ENCODE measurements at regions of chr7 and their contacts with region 1.

Region 1: GRCh38 chr7:36440880-36441279 is 51.2 kb downstream of the ANLN start:
- DNase-seq: no peak
- H3K4me3 ChIP-seq: no peak overlapping the region
- H3K27ac ChIP-seq: no peak overlapping the region
- H3K4me1 ChIP-seq: peaks cover 0 to 4% (median 0%) of the 10 kb centered on the region in 4 experiments; a peak in 2 of 7 replicates
- H3K27me3 ChIP-seq: no peaks in the 10 kb centered on the region
- CTCF ChIP-seq: peak in 1 of 3 experiments; percentile 45; a peak in 2 of 4 replicates
- EP300 ChIP-seq: no peak
- POLR2A ChIP-seq: no peak
- RAD21 ChIP-seq: peak in 1 of 2 experiments; percentile 33; a peak in 3 of 4 replicates

Region 2: DNA sequence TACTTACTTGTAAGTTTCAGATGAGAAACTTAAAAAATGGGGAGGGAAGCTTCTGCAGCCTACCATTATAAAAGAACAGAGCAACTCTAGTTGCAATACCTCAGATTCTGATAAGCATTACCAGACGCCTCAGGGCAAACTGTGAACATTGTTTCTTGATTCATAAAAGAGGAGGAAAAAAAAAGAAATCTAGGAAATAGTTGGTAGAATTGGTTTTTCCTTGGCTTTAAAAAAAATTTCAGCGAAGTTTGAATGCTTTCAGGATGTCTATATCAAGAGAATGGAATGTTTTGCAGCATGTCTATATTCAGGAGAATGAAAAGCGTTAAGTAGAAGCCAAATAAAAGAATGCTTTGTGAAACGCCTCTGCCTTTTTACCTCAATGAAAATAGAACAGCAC is 68.7 kb before region 1 on chr7:
- CTCF ChIA-PET with region 1: no interaction called
- POLR2A ChIA-PET with region 1: no interaction called
- DNase-seq: no peak
- H3K4me3 ChIP-seq: no peak overlapping the region
- H3K27ac ChIP-seq: no peak overlapping the region
- H3K4me1 ChIP-seq: no peaks in the 10 kb centered on the region
- H3K27me3 ChIP-seq: peaks cover 0 to 13% (median 7%) of the 10 kb centered on the region in 4 experiments; a peak in 4 of 7 replicates
- CTCF ChIP-seq: no peak
- EP300 ChIP-seq: no peak
- POLR2A ChIP-seq: no peak
- RAD21 ChIP-seq: no peak

Region 3: DNA sequence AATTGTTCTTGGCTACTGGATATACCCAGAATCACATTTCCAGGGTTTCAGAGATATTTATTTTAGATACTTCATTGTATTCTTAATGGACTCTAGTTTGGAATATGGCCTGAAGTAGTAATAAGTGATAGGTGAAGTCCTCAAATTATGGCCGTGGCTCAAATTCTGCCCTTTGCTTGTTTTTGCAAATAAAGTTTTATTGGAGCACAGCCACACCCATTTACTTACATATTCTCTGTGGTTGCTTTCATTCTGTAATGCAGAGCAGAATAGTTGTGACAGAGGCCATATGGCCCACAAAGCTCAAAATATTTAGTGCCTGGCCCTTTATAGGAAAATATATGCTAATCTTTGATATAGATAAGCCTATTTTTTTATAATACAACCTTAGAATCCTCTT is 31.7 kb before region 1 on chr7:
- CTCF ChIA-PET with region 1: interaction called, 10 read pairs
- POLR2A ChIA-PET with region 1: no interaction called
- DNase-seq: no peak
- H3K4me3 ChIP-seq: no peak overlapping the region
- H3K27ac ChIP-seq: no peak overlapping the region
- H3K4me1 ChIP-seq: peaks cover 2 to 4% (median 3%) of the 10 kb centered on the region in 4 experiments; a peak in 4 of 7 replicates
- H3K27me3 ChIP-seq: no peaks in the 10 kb centered on the region
- CTCF ChIP-seq: no peak
- EP300 ChIP-seq: no peak
- POLR2A ChIP-seq: no peak
- RAD21 ChIP-seq: no peak

Region 4: DNA sequence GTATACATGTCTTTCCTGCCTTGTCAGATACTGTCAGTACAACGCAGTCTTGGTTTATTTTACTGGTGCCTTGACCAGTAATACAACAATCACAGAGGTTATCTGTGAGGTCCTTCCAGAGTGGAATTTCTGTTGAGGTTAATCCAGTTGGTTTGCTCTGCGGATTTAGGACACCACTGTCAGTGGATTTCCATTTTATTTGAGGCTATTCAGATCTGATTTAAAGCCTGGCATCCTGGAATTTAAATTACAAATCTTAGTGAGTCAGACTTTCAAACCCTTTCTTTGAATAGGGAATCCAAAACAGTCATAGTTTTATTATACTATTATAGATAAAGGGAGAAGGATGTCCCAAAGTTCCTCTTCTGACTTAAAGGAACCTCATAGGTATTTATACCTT is 10.7 kb before region 1 on chr7:
- CTCF ChIA-PET with region 1: interaction called, 10 read pairs
- POLR2A ChIA-PET with region 1: no interaction called
- DNase-seq: no peak
- H3K4me3 ChIP-seq: no peak overlapping the region
- H3K27ac ChIP-seq: no peak overlapping the region
- H3K4me1 ChIP-seq: no peaks in the 10 kb centered on the region
- H3K27me3 ChIP-seq: no peaks in the 10 kb centered on the region
- CTCF ChIP-seq: no peak
- EP300 ChIP-seq: no peak
- POLR2A ChIP-seq: no peak
- RAD21 ChIP-seq: no peak

Region 5: DNA sequence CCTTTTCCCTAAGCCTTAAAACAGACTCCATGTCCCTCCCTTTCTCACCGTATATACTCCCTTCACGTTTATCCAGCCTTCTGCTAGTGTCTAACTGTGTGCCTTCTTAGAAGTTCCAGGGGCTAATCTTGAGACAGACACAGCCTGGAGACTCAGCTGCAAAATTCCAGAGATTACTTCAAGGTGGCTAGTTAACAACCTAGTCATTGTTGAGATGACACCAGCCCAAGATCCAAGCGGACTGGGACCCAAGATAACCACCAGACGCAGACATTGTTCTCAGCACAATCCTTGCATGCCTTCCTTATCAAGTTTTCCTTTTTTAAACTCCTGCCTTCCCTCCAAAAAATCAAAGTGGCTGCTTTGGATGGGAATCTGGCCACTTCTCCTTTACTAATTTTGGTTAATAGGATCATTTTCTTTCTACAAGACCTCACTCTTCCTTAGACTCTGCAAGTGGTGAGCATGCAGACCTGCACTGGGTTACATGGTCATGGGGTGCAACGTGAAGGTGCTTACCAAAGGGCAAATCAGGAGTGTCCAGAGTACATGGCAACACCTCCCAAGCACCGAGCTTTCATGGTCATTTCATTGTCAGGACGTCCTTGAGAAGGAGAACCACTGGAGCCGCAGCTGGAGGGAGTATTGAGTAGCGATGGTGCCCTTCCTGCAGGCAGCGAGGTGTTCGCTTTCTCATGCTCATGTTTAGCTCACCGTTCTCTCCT is 18.5 kb after region 1 on chr7:
- CTCF ChIA-PET with region 1: interaction called, 18 read pairs
- POLR2A ChIA-PET with region 1: no interaction called
- DNase-seq: no peak
- H3K4me3 ChIP-seq: no peak overlapping the region
- H3K27ac ChIP-seq: no peak overlapping the region
- H3K4me1 ChIP-seq: no peaks in the 10 kb centered on the region
- H3K27me3 ChIP-seq: no peaks in the 10 kb centered on the region; a peak in 1 of 7 replicates
- CTCF ChIP-seq: no peak
- EP300 ChIP-seq: no peak
- POLR2A ChIP-seq: no peak
- RAD21 ChIP-seq: no peak

Region 6: GRCh38 chr7:36473454-36474282 is 32.8 kb after region 1 on chr7:
- CTCF ChIA-PET with region 1: interaction called, 10 read pairs
- POLR2A ChIA-PET with region 1: no interaction called
- DNase-seq: peak in 1 of 2 experiments; percentile 89
- H3K4me3 ChIP-seq: no peak overlapping the region
- H3K27ac ChIP-seq: no peak overlapping the region
- H3K4me1 ChIP-seq: no peaks in the 10 kb centered on the region
- H3K27me3 ChIP-seq: no peaks in the 10 kb centered on the region
- CTCF ChIP-seq: peak; percentile 57 to 77 (median 71)
- EP300 ChIP-seq: no peak
- POLR2A ChIP-seq: no peak
- RAD21 ChIP-seq: peak; percentile 90 to 93

Region 7: GRCh38 chr7:36708767-36709166 is 267.9 kb after region 1 on chr7:
- CTCF ChIA-PET with region 1: no interaction called
- POLR2A ChIA-PET with region 1: no interaction called
- DNase-seq: no peak
- H3K4me3 ChIP-seq: no peak overlapping the region
- H3K27ac ChIP-seq: no peak overlapping the region
- H3K4me1 ChIP-seq: peaks cover 0 to 3% (median 0%) of the 10 kb centered on the region in 4 experiments; a peak in 1 of 7 replicates
- H3K27me3 ChIP-seq: no peaks in the 10 kb centered on the region
- CTCF ChIP-seq: no peak
- EP300 ChIP-seq: no peak
- POLR2A ChIP-seq: no peak
- RAD21 ChIP-seq: no peak